ENCODE measurements at regions of chr18 and their contacts with region 1.

Region 1: GRCh38 chr18:55781481-55781957 is 193.5 kb upstream of the TCF4 start:
- DNase-seq: peak in 41 of 42 donors; percentile 31 to 90 (median 70)

Region 2: GRCh38 chr18:55234366-55235093 is 547.0 kb before region 1 on chr18:
- intact Hi-C with region 1: no loop called
- DNase-seq: peak; percentile 61 to 96 (median 86)

Region 3: DNA sequence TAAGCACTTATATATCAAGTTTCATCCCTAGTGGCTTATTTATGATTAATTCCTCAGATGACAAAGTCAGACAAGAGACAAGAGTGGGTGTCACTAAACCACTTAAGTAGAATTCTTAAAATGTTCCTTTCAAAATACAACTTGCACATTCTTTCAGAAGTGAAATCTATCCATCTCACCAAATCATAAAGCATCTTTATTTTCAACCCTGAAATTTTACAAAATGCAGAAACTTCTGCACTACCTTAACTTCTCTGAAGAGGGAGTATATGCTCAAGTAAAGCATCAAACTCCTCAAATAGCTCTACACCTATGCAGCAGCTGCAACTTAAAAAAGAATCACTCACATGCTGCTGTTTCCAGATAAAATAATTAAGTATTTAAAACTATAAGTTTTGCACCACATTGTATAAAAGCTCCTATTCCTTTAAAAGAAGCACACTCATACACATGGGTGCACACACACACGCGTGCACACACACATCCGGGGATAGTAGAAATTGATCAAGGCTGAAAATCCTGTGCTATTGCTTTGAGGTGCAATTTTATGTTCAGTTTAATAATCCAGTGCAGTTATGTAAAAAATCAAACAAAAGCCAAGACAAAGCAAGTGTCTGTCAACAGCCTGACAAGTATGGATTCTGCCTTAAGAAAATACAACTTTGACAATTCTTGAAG is 438.0 kb before region 1 on chr18:
- intact Hi-C with region 1: loop called (anchors 10 kb)
- DNase-seq: peak in 1 of 42 donors; percentile 42

Region 4: DNA sequence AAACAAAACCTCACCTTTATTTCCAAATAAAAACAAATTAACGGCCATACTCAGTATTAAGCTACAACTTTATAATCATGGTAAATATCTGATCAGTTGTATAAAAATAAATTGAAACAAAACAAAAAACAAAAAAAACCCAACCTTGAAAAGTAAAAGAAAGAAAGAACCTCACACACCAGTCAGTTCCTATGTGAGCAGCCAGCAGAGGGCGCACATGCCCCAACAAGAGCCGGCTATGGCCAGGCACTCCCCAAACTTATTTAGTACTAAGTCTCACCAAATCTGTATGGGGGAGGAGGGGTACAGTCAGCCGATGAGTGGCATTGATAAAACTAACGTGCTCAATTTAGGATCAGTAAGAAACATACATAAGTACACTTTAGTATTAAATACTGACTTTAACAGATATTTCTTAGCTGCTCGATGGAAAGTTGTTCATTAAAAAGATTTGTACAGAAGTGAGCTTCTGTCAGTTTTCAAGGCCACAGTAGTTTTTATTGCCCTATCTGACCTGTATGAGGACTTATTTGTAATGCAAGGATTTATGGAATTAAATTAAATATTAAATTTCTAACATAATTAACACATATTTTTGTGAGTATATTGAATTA is 366.2 kb before region 1 on chr18:
- intact Hi-C with region 1: loop called (anchors 5 kb)
- DNase-seq: peak; percentile 73 to 97 (median 90)

Region 5: GRCh38 chr18:55477499-55477859 is 304.0 kb before region 1 on chr18:
- intact Hi-C with region 1: no loop called
- DNase-seq: peak in 1 of 42 donors; percentile 44

Region 6: DNA sequence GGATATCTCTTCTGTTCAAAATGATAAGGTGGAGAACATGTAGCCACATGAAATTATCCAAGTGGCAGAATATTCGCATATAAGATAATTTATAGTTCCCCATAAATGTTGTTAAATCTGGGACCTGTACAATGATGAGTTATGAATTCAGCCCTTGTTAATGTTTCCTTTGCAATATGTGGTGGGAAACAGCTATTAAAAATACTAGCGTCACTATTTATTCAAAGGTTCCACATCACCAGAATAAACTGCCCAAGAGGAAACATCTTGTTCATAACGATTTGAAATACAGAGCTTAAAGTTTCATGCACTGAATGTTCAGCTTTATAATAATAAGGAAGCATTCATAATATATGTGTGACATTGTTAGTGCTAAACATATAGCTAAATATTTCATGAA is 30.4 kb after region 1 on chr18:
- intact Hi-C with region 1: no loop called
- DNase-seq: no peak